Gastrocnemius medialis (tissue), 4 donors: ENCODE measurements at regions of chr2 and their contacts with region 1.

Region 1: GRCh38 chr2:64750817-64751285 is 97.1 kb upstream of the SERTAD2 start:
- DNase-seq: peak in 1 of 2 donors; percentile 100
- ATAC-seq: peak; percentile 81 to 88
- H3K4me3 ChIP-seq: peak overlapping the region; percentile 73 to 82 (median 77)
- H3K27ac ChIP-seq: peak overlapping the region; percentile 93 to 96 (median 95)
- H3K4me1 ChIP-seq: peaks cover 12 to 18% of the 10 kb centered on the region in 2 donors
- H3K27me3 ChIP-seq: no peaks in the 10 kb centered on the region
- CTCF ChIP-seq: peak in 1 of 5 experiments; percentile 6
- POLR2A ChIP-seq: peak; percentile 96 to 97

Region 2: GRCh38 chr2:63588385-63589147 is 1162.3 kb before region 1 on chr2 and contains the starts of genes MDH1 and WDPCP:
- in situ Hi-C with region 1: no loop called
- intact Hi-C with region 1: loop called (anchors 5 kb)
- DNase-seq: peak; percentile 93 to 96
- ATAC-seq: peak; percentile 88 to 95
- H3K4me3 ChIP-seq: peak within 1 kb of the TSS; percentile 63 to 93 (median 76)
- H3K27ac ChIP-seq: peak within 1 kb of the TSS; percentile 86 to 92 (median 90)
- H3K4me1 ChIP-seq: peaks cover 54% of the 10 kb centered on the region in 2 donors
- H3K27me3 ChIP-seq: no peaks in the 10 kb centered on the region
- CTCF ChIP-seq: no peak
- POLR2A ChIP-seq: peak; percentile 76 to 87
- total RNA-seq, gene MDH1: 133 to 241 (median 194) TPM
- total RNA-seq, gene WDPCP: 7.2 to 47.3 (median 13.0) TPM

Region 3: DNA sequence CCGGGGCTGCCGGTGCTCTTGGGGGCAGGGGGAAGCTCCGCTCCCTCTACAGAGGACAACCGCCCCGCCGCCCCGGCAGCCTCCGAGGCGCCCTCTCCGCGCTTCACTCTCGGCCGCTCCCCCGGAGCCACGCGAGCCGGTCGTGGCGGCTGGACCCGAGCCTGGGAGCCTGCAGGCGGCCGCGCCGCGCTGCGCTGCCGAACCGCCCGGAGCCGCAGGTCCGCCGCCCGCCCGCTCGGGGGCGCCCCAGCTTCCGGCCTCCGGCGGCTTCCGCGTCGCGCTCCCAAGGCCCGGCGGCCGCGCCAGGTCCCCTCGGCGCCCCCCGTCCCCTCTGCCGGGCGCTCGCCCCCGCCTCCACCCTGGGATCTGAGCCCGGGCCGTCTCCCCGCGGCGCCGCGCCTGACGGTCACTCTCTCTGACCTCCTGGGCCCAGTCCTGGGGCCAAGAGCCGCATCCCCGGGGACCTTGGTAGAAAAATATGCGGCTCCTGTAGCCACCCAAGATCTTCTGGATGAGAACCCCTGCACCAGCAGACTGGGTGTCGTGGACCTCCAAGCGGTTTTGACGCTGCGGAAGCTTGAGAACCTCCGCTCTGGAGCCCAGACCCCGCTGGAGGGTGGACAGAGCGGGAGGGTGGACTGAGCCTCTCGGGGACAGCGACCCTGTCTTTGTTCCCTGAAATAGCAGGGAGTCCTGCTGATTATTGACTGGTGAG is 141.5 kb before region 1 on chr2:
- in situ Hi-C with region 1: no loop called
- intact Hi-C with region 1: loop called (anchors 5 kb)
- DNase-seq: peak in 1 of 2 donors; percentile 34
- ATAC-seq: peak; percentile 76 to 79
- H3K4me3 ChIP-seq: peak overlapping the region; percentile 59 to 85 (median 66)
- H3K27ac ChIP-seq: peak overlapping the region; percentile 65 to 83 (median 77)
- H3K4me1 ChIP-seq: peaks cover 8 to 11% of the 10 kb centered on the region in 2 donors
- H3K27me3 ChIP-seq: no peaks in the 10 kb centered on the region
- CTCF ChIP-seq: peak in 4 of 5 experiments; percentile 71 to 76 (median 74)
- POLR2A ChIP-seq: peak in 1 of 2 donors; percentile 24

Region 4: DNA sequence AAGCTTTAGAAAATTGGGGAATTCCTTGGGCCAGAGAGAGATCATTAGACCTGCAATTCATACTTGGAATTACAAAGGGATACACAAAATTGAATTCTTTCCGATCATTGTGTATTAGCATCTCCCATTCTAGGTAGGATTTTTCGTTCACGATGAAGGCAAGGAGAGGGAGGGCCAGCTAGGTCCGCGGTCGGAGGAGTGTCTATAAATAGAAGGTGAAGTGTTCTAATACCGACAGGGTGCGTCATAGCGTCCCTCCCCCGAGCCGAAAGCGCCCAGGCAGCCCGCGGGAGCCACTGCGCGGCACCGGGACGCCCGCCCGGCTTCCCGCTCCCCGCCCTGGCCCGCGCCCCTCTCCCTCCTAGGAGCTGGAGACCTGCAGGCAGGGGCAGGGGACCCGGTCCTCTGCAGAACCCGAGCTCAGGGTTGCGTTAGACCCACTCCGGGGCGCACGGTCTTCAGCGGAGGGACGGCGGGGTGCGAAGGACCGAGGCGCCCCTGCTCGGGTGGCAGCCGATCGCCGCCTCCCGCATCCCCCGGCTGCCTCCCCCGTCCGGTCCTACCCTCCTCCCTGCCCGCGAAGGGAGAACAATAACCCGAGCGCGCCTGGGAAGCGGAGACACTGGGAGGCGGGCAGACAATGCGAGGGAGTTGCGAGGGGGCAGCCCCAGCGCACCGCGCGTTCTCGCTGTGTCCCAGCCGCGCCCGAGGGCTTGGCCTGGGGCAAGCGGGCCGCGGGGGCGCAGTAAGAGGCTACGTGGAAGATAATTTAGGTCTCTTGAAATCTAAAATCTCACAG is 17.0 kb after region 1 on chr2:
- in situ Hi-C with region 1: no loop called
- intact Hi-C with region 1: loop called (anchors 1 kb)
- DNase-seq: peak; percentile 88 to 89
- ATAC-seq: peak; percentile 98
- H3K4me3 ChIP-seq: peak overlapping the region; percentile 77 to 91 (median 84)
- H3K27ac ChIP-seq: peak overlapping the region; percentile 93 to 99 (median 97)
- H3K4me1 ChIP-seq: peaks cover 4 to 13% of the 10 kb centered on the region in 2 donors
- H3K27me3 ChIP-seq: no peaks in the 10 kb centered on the region
- CTCF ChIP-seq: peak in 1 of 5 experiments; percentile 10
- POLR2A ChIP-seq: peak; percentile 89 to 90

Region 5: DNA sequence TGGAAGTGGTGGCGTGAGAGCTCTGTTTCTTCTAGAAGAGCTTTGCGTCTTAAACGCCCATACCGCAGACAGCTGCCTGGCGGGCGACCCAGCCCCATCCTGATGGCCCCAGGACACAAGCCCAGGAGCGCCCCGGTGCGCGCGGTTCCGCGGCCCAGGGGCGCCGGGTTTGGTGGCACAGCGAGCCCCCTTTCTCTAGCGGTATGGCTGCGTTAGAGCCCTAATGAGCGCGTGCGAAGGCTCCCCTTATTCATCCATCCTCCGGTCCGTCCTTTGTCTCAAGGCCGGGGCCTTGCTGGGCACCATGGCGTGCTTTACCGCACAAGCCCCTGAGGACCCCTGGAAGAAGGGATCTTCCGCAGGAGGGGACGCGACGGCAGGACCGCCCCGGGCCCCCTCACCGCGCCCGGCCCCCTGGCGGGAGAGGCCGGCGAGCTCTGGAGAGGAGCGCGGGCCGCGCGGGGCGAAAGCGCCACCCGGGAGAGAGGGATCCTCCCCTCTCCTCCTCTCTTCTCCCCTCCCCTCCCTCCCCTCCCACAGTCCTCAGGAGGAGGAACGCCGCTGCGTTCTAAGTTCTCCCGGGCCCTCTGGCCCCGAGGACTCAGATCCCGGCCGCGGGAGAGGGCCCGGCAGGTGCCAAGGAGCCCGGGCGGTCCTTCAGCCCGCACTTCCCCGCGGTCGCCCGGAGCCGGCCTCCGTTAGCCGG is 237.7 kb after region 1 on chr2:
- in situ Hi-C with region 1: no loop called
- intact Hi-C with region 1: loop called (anchors 5 kb)
- DNase-seq: peak; percentile 70 to 82
- ATAC-seq: peak; percentile 60 to 77
- H3K4me3 ChIP-seq: peak overlapping the region; percentile 73 to 99 (median 92)
- H3K27ac ChIP-seq: peak overlapping the region; percentile 89 to 97 (median 96)
- H3K4me1 ChIP-seq: peaks cover 49 to 52% of the 10 kb centered on the region in 2 donors
- H3K27me3 ChIP-seq: no peaks in the 10 kb centered on the region
- CTCF ChIP-seq: peak; percentile 40 to 62 (median 55)
- POLR2A ChIP-seq: peak; percentile 62 to 69